ENCODE measurements at regions of chr12 and their contacts with region 1.

Region 1: DNA sequence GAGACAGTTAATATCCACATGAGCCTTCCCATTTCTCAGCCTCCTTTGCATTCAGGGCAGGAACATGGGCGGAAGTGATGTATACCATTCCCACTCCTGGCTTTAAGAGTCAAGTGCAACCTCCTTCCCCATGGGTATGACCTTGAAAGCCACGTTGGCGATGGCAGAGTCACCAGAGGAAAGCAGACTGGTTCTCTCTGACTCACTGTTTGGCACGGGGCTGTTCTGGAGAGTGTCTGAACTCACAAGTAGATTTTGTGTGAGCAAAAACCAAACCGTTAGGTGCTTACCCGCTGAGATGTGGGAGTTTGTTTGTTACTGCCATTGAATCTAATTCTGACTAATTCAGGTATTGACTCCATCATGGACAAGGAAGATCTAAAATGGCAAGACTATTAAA is 36.7 kb upstream of the PZP start:
- DNase-seq: peak; percentile 87
- H3K4me3 Mint-ChIP-seq: no peak overlapping the region
- H3K27ac Mint-ChIP-seq: peak overlapping the region; percentile 79
- H3K4me1 Mint-ChIP-seq: peaks cover 49% of the 10 kb centered on the region
- H3K27me3 Mint-ChIP-seq: peaks cover 9% of the 10 kb centered on the region

Region 2: DNA sequence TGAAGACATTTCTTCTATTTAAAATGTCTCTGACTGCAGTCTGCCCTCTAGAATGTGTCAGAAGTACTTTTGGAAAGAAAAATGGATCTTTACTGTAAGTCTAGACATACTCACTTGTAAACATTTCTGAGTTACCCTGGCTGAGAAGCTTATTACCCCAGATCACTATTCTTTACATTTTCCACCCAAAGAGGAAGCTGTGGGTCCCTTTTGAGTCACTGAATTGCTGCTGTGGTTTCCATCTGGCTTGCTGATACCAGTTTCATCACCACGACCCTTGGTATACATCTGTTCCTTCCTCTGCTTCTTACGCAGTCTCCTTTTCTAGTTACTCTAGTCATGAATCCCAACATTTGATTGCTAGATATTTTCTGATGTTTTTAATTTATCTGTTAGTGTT is 751.8 kb before region 1 on chr12:
- CTCF ChIA-PET with region 1: no interaction called
- intact Hi-C with region 1: loop called (anchors 1 kb)
- DNase-seq: peak; percentile 83
- H3K4me3 Mint-ChIP-seq: no peak overlapping the region
- H3K27ac Mint-ChIP-seq: peak overlapping the region; percentile 80
- H3K4me1 Mint-ChIP-seq: peaks cover 25% of the 10 kb centered on the region
- H3K27me3 Mint-ChIP-seq: peaks cover 5% of the 10 kb centered on the region

Region 3: GRCh38 chr12:8996682-8997360 is 248.1 kb before region 1 on chr12:
- CTCF ChIA-PET with region 1: no interaction called
- intact Hi-C with region 1: loop called (anchors 1 kb)
- DNase-seq: peak; percentile 65
- H3K4me3 Mint-ChIP-seq: no peak overlapping the region
- H3K27ac Mint-ChIP-seq: peak overlapping the region; percentile 16
- H3K4me1 Mint-ChIP-seq: peaks cover 67% of the 10 kb centered on the region
- H3K27me3 Mint-ChIP-seq: no peaks in the 10 kb centered on the region

Region 4: DNA sequence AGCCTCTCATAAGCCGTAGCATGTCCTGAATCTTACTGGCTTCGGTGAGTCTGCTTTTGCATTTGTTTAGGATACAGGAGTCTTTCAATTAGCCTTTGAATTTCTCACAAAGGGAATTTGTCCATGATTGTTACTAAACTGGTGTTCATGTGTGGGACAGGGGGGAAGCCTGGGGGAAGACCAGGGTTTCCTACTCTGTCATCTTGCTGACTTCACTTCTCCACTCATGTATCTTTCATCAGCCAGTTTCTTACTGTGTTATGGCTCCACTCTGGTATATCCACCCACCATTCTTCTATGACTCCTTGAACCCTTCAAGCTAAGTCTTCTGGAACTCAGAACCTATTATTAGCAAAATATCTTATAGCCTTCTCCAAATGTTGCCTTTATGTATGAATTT is 97.4 kb before region 1 on chr12:
- CTCF ChIA-PET with region 1: no interaction called
- intact Hi-C with region 1: loop called (anchors 2 kb)
- DNase-seq: no peak
- H3K4me3 Mint-ChIP-seq: no peak overlapping the region
- H3K27ac Mint-ChIP-seq: no peak overlapping the region
- H3K4me1 Mint-ChIP-seq: peaks cover 15% of the 10 kb centered on the region
- H3K27me3 Mint-ChIP-seq: no peaks in the 10 kb centered on the region

Region 5: DNA sequence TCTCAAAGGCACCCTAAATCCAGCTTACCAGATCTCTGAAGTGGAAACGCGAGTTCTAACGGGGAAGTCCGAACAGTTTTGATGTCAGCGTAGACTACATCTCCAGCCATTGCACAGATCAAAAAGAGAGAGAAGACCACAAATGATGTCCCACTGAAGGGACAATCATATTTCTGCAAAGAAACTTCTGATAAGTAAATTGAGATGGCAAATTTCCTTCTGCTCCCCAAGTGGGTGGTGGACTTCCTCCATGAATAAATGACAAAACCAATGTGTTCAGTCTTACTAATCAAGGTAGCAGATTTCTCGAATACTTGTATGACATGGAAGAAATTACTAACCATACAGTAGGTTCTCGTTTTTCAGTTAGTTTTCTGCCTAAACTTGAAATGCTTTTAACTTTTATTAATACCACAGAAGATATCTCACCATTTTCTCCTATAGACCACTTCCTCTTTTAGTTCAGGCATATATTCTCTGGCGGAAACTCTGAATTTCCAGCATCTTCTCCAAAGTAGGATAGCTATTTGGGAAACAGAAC is 488.1 kb after region 1 on chr12 and contains the start of gene CLECL1:
- CTCF ChIA-PET with region 1: no interaction called
- intact Hi-C with region 1: loop called (anchors 2 kb)
- DNase-seq: peak; percentile 44
- H3K4me3 Mint-ChIP-seq: peak within 1 kb of the TSS; percentile 63
- H3K27ac Mint-ChIP-seq: peak within 1 kb of the TSS; percentile 59
- H3K4me1 Mint-ChIP-seq: peaks cover 54% of the 10 kb centered on the region
- H3K27me3 Mint-ChIP-seq: no peaks in the 10 kb centered on the region
- total RNA-seq, gene CLECL1: 1.7 to 1.9 TPM

Region 6: DNA sequence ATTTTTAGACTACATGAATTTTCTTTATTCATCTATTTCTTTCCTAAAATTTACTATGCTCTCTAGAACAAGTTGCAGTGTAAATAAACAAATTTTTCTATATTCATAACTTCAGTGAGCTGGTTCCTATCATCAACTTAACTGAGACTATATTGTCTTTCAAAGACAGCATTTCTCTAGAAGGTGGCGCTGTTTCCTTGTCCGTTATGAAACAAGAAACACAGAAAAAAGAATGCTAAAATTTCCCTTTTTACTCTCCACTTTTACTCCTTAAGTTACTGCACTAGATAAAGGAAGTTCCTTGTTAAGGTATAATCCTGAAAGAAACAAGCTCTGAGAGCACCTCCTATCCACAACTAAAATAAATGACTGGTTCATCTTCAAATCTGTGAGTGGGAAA is 695.5 kb after region 1 on chr12:
- CTCF ChIA-PET with region 1: no interaction called
- intact Hi-C with region 1: loop called (anchors 5 kb)
- DNase-seq: peak; percentile 28
- H3K4me3 Mint-ChIP-seq: no peak overlapping the region
- H3K27ac Mint-ChIP-seq: no peak overlapping the region
- H3K4me1 Mint-ChIP-seq: peaks cover 23% of the 10 kb centered on the region
- H3K27me3 Mint-ChIP-seq: no peaks in the 10 kb centered on the region

Region 7: GRCh38 chr12:10540776-10541205 is 1295.9 kb after region 1 on chr12:
- CTCF ChIA-PET with region 1: no interaction called
- intact Hi-C with region 1: loop called (anchors 2 kb)
- DNase-seq: no peak
- H3K4me3 Mint-ChIP-seq: no peak overlapping the region
- H3K27ac Mint-ChIP-seq: peak overlapping the region; percentile 22
- H3K4me1 Mint-ChIP-seq: peaks cover 15% of the 10 kb centered on the region
- H3K27me3 Mint-ChIP-seq: peaks cover 36% of the 10 kb centered on the region